MCF 10A (cell line): ENCODE measurements at regions of chr4 and their contacts with region 1.

Region 1: DNA sequence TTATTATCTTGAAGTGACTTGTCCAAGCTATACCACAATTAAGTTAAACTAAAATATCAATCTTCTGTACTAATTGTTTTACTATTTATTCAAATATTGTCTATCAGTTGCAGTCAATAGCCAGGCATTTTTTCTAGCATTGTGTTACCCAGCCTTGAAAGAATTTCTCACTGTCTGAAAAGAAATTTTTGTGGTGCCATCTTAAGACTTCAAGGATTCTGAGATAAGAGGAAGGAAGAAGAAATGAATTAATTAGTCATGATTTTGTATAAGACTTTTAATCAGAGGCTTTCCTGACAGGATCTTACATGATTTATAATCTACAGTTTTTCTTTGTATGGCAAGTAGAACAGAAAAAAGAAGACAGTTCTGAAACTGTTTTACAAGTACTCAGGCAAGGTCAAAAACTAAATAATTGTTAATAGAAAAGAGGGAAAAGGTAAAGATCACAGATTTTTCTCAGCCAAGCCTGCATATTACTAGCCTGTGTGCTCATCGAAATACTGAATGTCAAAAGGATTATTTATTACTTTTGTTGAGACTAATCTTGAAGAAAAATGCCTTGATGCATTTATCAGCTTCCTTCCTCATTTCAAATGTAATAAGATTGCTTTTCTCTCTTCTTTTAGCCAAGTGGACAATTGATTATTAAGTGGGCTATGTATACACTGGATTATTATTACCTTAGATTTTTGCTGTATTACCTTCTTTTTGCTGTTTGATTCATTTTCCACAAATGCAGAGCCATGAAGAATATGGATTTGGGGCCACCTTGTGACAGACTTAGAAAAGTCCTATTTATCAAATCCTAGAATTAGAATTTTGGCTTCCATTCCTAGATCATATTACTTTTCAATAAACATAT is 53.8 kb downstream of the CXCL1 start:
- DNase-seq: peak; percentile 69
- H3K4me3 Mint-ChIP-seq: no peak overlapping the region
- H3K27ac Mint-ChIP-seq: no peak overlapping the region
- H3K4me1 Mint-ChIP-seq: peaks cover 26% of the 10 kb centered on the region
- H3K27me3 Mint-ChIP-seq: no peaks in the 10 kb centered on the region
- CTCF ChIP-seq: peak; percentile 53

Region 2: DNA sequence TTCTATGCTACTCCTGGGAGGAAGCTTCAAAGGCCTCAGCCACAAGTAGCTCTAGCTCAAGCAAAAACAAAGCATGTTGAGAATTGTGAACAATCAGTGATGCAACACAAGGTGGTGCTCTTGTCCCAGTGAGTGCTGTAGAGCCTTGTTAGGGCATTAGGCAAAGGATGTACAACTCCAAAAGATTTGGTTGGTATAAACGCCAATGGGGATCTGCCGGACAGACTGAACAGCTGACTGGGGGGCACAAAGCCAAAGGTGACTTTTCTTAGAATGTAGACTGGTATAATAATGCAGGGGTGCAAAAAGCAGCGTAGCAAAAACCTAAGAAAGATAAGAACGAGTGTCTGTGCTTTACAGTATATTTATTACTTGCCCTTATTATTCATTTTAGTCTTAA is 581.5 kb before region 1 on chr4:
- CTCF ChIA-PET with region 1: no interaction called
- POLR2A ChIA-PET with region 1: no interaction called
- intact Hi-C with region 1: loop called (anchors 10 kb)
- DNase-seq: peak; percentile 72
- H3K4me3 Mint-ChIP-seq: no peak overlapping the region
- H3K27ac Mint-ChIP-seq: no peak overlapping the region
- H3K4me1 Mint-ChIP-seq: no peaks in the 10 kb centered on the region
- H3K27me3 Mint-ChIP-seq: no peaks in the 10 kb centered on the region
- CTCF ChIP-seq: peak; percentile 62

Region 3: DNA sequence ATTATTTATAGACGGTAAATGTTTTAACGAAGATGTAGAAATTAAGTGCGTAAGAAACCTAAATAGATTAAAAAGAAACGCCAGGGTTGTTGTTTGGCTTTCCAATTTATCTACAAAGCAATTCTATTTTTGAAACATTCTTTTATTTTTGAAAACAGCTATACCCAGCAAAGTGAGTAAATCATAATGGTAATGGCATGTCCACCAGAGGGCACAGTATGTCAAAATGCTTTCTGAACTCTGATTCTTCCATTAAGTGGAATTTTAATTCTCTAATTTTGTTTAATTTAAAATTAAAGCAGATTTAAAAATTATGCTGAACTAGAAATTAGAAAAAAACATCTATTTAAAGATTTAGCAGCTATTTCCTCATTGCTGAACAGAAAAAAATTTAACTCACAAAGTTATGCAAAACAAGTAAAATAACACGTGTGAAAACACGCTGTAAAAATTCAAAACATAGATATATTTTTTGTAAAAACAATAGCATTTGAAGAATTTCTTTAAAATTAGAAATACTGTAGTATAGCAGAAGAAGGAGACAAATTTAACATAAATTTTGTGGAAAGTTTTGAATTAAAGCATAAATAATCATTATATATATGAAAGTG is 329.3 kb before region 1 on chr4:
- CTCF ChIA-PET with region 1: interaction called, 6 read pairs
- POLR2A ChIA-PET with region 1: no interaction called
- intact Hi-C with region 1: loop called (anchors 5 kb)
- DNase-seq: peak; percentile 51
- H3K4me3 Mint-ChIP-seq: no peak overlapping the region
- H3K27ac Mint-ChIP-seq: no peak overlapping the region
- H3K4me1 Mint-ChIP-seq: peaks cover 18% of the 10 kb centered on the region
- H3K27me3 Mint-ChIP-seq: no peaks in the 10 kb centered on the region
- CTCF ChIP-seq: peak; percentile 38

Region 4: DNA sequence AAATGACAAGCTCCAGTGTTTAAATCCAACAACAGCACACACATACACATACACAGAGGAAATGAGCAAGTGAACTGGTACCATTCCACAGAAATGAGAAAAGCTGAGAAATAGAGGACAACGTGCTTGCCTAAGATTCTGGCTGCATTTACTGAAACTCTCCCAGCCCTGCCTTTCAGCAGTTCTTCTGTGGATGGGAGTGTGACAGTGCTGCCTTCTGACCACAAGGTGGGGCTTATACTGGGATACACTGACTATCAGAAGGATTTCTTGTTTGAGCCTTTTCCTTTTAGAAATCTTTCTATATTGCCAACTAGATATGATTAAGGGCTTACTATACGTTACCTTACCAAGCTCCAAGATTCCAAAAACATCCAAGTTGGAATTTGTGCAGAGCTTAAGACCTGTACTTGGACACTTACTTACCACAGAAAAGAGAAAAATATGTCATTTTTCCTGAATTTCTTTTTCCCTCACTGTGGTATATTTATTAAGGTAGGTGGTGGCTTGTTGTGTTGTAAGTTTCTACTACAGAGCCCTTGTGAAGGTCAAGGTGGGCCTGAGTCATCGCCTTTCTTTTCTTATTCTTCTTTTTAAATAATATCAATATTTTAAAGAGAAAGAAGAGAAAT is 193.3 kb before region 1 on chr4:
- CTCF ChIA-PET with region 1: interaction called, 9 read pairs
- POLR2A ChIA-PET with region 1: no interaction called
- intact Hi-C with region 1: loop called (anchors 1 kb)
- DNase-seq: peak; percentile 81
- H3K4me3 Mint-ChIP-seq: no peak overlapping the region
- H3K27ac Mint-ChIP-seq: no peak overlapping the region
- H3K4me1 Mint-ChIP-seq: peaks cover 42% of the 10 kb centered on the region
- H3K27me3 Mint-ChIP-seq: no peaks in the 10 kb centered on the region
- CTCF ChIP-seq: peak; percentile 72

Region 5: GRCh38 chr4:73869130-73870050 is 53.6 kb before region 1 on chr4 and contains the start of gene CXCL1:
- CTCF ChIA-PET with region 1: interaction called, 30 read pairs
- POLR2A ChIA-PET with region 1: interaction called, 61 read pairs
- intact Hi-C with region 1: loop called (anchors 1 kb)
- DNase-seq: peak; percentile 74
- H3K4me3 Mint-ChIP-seq: peak within 1 kb of the TSS; percentile 95
- H3K27ac Mint-ChIP-seq: peak within 1 kb of the TSS; percentile 92
- H3K4me1 Mint-ChIP-seq: peaks cover 37% of the 10 kb centered on the region
- H3K27me3 Mint-ChIP-seq: no peaks in the 10 kb centered on the region
- CTCF ChIP-seq: no peak
- total RNA-seq, gene CXCL1: 35.0 and 49.3 TPM in 2 replicates

Region 6: DNA sequence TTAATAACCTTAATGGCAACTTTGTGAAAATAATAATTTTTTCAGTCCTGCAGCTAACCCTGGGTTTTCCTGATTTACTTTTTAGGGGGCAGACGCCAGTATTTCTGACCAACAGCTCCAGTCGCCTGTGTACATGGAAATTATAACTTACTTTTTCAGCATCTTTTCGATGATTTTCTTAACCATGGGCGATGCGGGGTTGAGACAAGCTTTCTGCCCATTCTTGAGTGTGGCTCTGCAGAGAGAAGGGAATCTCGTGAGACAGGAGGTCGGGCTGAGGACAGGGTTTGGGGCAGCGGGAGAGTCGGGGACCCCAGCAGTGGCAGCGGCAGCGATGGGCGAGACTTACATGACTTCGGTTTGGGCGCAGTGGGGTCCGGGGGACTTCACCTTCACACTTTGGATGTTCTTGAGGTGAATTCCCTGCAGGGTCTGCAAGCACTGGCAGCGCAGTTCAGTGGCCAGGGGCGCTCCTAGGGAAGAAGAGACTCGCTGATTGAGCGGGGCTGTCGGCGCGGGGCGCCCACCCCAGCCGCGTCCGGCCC is 175.5 kb after region 1 on chr4:
- CTCF ChIA-PET with region 1: interaction called, 5 read pairs
- POLR2A ChIA-PET with region 1: interaction called, 9 read pairs
- intact Hi-C with region 1: loop called (anchors 1 kb)
- DNase-seq: no peak
- H3K4me3 Mint-ChIP-seq: peak overlapping the region; percentile 84
- H3K27ac Mint-ChIP-seq: peak overlapping the region; percentile 88
- H3K4me1 Mint-ChIP-seq: peaks cover 34% of the 10 kb centered on the region
- H3K27me3 Mint-ChIP-seq: no peaks in the 10 kb centered on the region
- CTCF ChIP-seq: no peak